A673 (cell line): ENCODE measurements at regions of chr7 and their contacts with region 1.

Region 1: DNA sequence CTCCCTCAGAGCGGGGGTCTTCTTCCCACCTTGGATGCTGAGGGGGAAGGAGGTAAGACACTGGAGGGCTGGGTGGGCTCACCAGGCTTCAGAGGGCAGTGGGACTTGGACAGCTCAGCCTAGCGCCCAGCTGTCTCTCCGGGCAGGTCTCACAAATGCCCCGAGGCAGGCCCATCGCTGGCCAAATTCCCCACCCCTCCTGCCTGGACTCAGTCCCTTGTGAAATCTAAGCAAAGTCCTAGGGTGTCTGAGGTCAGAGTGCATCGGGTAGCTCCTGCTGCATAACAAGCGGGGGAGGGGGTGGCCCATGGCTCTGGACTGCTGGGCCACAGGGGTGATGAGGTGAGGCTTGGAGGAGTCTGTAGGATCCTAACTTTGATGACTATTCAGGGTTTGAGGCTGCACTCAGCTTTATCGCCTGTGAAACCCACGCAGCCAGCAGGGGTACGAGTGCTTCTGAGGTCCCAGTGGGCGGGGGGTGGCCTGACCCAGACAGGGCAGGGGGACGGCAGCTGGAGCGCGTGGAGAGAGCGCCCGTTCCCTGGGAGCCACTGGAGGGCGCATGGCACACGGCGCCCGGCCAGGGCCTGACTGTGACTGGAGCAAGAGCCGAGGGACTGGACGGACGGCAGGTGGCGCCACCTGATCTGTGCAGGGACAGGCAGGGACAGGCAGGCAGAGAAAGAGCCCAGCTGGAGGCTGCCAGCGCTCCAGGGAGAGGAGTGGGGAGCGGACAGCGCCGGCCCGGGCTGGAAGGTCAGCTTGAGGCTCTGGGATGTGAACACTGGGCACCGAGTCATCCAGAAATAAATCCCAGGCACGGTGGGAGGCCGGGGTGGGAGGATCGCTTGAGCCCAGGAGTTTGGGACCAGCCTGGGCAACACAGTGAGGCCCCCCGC is 10.0 kb downstream of the CYP2W1 start:
- DNase-seq: peak; percentile 96
- H3K4me3 ChIP-seq: no peak overlapping the region
- H3K27ac ChIP-seq: no peak overlapping the region
- H3K4me1 ChIP-seq: no peaks in the 10 kb centered on the region
- H3K27me3 ChIP-seq: no peaks in the 10 kb centered on the region
- CTCF ChIP-seq: peak; percentile 100

Region 2: GRCh38 chr7:1065263-1066260 is 72.6 kb after region 1 on chr7:
- CTCF ChIA-PET with region 1: interaction called, 42 read pairs
- POLR2A ChIA-PET with region 1: no interaction called
- intact Hi-C with region 1: loop called (anchors 1 kb)
- DNase-seq: peak; percentile 83
- H3K4me3 ChIP-seq: no peak overlapping the region
- H3K27ac ChIP-seq: no peak overlapping the region
- H3K4me1 ChIP-seq: peaks cover 12% of the 10 kb centered on the region
- H3K27me3 ChIP-seq: no peaks in the 10 kb centered on the region
- CTCF ChIP-seq: peak; percentile 87

Region 3: GRCh38 chr7:1123715-1124114 is 130.8 kb after region 1 on chr7:
- CTCF ChIA-PET with region 1: interaction called, 12 read pairs
- POLR2A ChIA-PET with region 1: no interaction called
- intact Hi-C with region 1: no loop called
- DNase-seq: peak; percentile 66
- H3K4me3 ChIP-seq: no peak overlapping the region
- H3K27ac ChIP-seq: peak overlapping the region; percentile 53
- H3K4me1 ChIP-seq: peaks cover 20% of the 10 kb centered on the region
- H3K27me3 ChIP-seq: no peaks in the 10 kb centered on the region
- CTCF ChIP-seq: peak; percentile 70

Region 4: GRCh38 chr7:1175967-1176851 is 183.3 kb after region 1 on chr7:
- CTCF ChIA-PET with region 1: interaction called, 9 read pairs
- POLR2A ChIA-PET with region 1: no interaction called
- intact Hi-C with region 1: loop called (anchors 2 kb)
- DNase-seq: peak; percentile 88
- H3K4me3 ChIP-seq: peak overlapping the region; percentile 28
- H3K27ac ChIP-seq: peak overlapping the region; percentile 21
- H3K4me1 ChIP-seq: peaks cover 16% of the 10 kb centered on the region
- H3K27me3 ChIP-seq: no peaks in the 10 kb centered on the region
- CTCF ChIP-seq: peak; percentile 97

Region 5: GRCh38 chr7:1432411-1433082 is 439.6 kb after region 1 on chr7:
- CTCF ChIA-PET with region 1: no interaction called
- POLR2A ChIA-PET with region 1: no interaction called
- intact Hi-C with region 1: loop called (anchors 5 kb)
- DNase-seq: peak; percentile 80
- H3K4me3 ChIP-seq: no peak overlapping the region
- H3K27ac ChIP-seq: no peak overlapping the region
- H3K4me1 ChIP-seq: peaks cover 13% of the 10 kb centered on the region
- H3K27me3 ChIP-seq: no peaks in the 10 kb centered on the region
- CTCF ChIP-seq: peak; percentile 97

Region 6: DNA sequence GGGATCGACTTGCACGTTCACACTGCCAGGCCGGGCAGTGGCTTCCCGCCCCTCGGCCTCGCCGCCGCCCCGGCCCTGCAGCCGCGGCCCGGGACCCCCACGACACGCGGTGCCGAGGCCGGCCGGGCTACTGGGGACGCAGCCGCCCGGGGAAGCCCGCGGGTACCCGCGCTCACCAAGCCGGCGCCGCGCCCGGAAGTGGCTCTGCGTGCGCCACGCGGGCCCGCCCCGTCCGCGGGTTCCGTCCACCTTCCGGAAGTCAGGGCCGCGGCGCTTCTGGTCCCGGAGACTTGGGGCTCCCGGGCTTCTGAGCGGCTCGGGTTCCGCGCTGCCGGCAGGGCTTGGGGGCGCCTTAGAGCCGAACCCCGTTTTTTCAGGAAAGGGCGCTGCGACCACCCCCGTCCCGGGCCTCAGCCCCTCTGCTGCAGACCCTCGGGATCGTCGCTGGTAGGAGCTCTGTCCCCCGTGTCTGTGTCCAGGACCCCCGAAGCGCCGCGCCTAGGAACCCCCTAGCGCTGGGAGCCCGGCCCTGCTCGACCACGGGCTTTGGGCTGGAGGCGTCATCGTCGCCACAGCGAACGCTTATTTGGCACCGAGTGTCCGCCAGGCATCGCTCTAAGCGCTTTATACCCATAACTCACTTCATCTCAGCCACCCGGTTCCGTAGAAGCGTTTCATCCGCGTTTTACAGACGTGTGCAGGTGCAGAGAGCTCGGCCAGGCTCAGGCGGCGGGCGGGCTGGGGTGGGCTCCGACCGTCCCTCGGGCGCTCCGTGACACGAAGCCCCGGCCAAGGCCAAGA is 577.1 kb after region 1 on chr7 and contains the start of gene PSMG3:
- CTCF ChIA-PET with region 1: no interaction called
- POLR2A ChIA-PET with region 1: no interaction called
- intact Hi-C with region 1: no loop called
- DNase-seq: peak; percentile 97
- H3K4me3 ChIP-seq: peak within 1 kb of the TSS; percentile 97
- H3K27ac ChIP-seq: peak within 1 kb of the TSS; percentile 95
- H3K4me1 ChIP-seq: peaks cover 35% of the 10 kb centered on the region
- H3K27me3 ChIP-seq: no peaks in the 10 kb centered on the region
- CTCF ChIP-seq: peak; percentile 23; the same call in 1 of the 2 replicates
- total RNA-seq, gene PSMG3: 54.9 and 57.9 TPM in 2 replicates